AG04450 (cell line): ENCODE measurements at regions of chr3 and their contacts with region 1.

Region 1: GRCh38 chr3:160163229-160163878 is 61.9 kb upstream of the C3orf80 start:
- DNase-seq: peak; percentile 15
- H3K4me3 ChIP-seq: no peak overlapping the region
- H3K27ac ChIP-seq: no peak overlapping the region
- H3K27me3 ChIP-seq: no peaks in the 10 kb centered on the region
- CTCF ChIP-seq: peak; percentile 56

Region 2: DNA sequence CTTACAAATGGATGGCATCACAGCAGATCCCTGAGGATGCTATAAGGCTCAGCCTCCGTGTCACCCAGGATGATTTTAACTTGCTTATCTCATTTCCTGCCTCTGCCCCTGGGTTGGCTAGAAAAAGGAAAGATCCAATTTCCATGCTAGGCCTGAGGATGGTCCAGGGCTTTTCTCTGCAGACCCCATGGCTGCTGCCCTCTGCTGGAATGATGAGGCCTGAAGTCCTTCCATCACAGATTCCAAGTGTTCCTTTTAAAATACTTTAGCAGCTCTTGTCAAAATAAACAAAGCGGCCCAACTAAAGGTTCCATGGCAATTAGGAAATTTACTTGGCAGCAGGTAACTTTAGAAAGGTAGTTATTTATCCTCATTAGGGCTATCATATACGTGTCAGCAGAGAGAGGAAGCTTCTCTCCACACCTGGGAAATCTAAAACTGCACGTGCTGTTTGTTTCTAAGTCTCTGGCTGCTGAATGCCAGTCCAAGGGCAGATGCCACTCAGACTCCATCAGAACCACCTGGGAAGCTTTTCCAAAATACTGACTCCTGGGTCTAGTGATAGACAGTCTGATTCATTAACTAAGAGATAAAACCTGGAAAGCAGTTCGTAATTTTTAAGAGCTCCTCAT is 576.7 kb before region 1 on chr3:
- CTCF ChIA-PET with region 1: no interaction called
- POLR2A ChIA-PET with region 1: no interaction called
- DNase-seq: peak; percentile 11
- H3K4me3 ChIP-seq: no peak overlapping the region
- H3K27ac ChIP-seq: no peak overlapping the region
- H3K27me3 ChIP-seq: peaks cover 3% of the 10 kb centered on the region
- CTCF ChIP-seq: peak; percentile 77

Region 3: GRCh38 chr3:159872374-159873109 is 290.8 kb before region 1 on chr3:
- CTCF ChIA-PET with region 1: no interaction called
- POLR2A ChIA-PET with region 1: no interaction called
- DNase-seq: peak; percentile 74
- H3K4me3 ChIP-seq: no peak overlapping the region
- H3K27ac ChIP-seq: peak overlapping the region; percentile 71
- H3K27me3 ChIP-seq: no peaks in the 10 kb centered on the region
- CTCF ChIP-seq: peak; percentile 44

Region 4: DNA sequence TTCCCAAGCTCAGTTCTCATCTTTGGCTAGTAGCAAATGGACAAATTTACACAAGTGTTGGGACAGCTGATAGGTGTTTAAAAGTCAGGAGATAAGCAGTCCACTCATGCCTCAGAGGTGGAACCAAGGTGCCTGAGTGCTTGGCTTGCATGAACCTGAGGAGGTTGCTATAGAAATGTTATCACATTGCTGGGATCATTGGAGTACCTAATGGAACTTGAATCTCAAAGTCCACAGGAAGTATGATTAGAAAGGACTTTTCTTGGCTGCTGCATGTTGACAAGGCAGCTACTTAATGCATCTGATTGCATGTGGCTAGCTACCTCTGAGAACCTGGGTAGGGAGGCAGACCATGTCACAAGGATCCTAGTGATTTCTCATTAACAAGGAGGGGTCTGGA is 22.4 kb after region 1 on chr3:
- CTCF ChIA-PET with region 1: interaction called, 14 read pairs
- POLR2A ChIA-PET with region 1: no interaction called
- DNase-seq: no peak
- H3K4me3 ChIP-seq: no peak overlapping the region
- H3K27ac ChIP-seq: no peak overlapping the region
- H3K27me3 ChIP-seq: no peaks in the 10 kb centered on the region
- CTCF ChIP-seq: no peak

Region 5: GRCh38 chr3:160210799-160211221 is 47.5 kb after region 1 on chr3:
- CTCF ChIA-PET with region 1: interaction called, 32 read pairs
- POLR2A ChIA-PET with region 1: no interaction called
- DNase-seq: peak; percentile 6
- H3K4me3 ChIP-seq: no peak overlapping the region
- H3K27ac ChIP-seq: no peak overlapping the region
- H3K27me3 ChIP-seq: peaks cover 8% of the 10 kb centered on the region
- CTCF ChIP-seq: peak; percentile 49

Region 6: GRCh38 chr3:160343132-160343531 is 179.8 kb after region 1 on chr3:
- CTCF ChIA-PET with region 1: interaction called, 42 read pairs
- POLR2A ChIA-PET with region 1: no interaction called
- DNase-seq: no peak
- H3K4me3 ChIP-seq: no peak overlapping the region
- H3K27ac ChIP-seq: no peak overlapping the region
- H3K27me3 ChIP-seq: no peaks in the 10 kb centered on the region
- CTCF ChIP-seq: peak; percentile 42

Region 7: GRCh38 chr3:160413613-160414248 is 250.4 kb after region 1 on chr3:
- CTCF ChIA-PET with region 1: interaction called, 156 read pairs
- POLR2A ChIA-PET with region 1: no interaction called
- DNase-seq: peak; percentile 74
- H3K4me3 ChIP-seq: no peak overlapping the region
- H3K27ac ChIP-seq: no peak overlapping the region
- H3K27me3 ChIP-seq: no peaks in the 10 kb centered on the region
- CTCF ChIP-seq: peak; percentile 93

Region 8: DNA sequence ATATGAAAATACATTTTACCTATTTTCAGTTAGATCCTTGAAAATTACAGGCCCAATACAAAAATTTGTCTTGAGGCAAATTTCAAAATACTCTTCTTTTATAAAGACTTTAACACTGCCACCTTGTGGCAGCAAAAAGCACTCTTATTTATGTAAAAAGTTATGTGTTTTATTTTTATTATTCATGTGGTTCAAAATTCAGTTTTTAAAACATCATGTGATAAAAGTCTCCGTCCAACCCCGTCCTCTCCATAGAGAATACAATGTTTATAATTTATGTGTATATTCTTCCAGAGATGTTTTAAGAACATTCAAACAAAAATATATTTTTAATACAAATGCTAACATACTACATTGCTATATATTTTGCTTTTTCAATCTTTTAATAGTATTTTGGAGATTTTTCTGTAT is 323.1 kb after region 1 on chr3:
- CTCF ChIA-PET with region 1: interaction called, 16 read pairs
- POLR2A ChIA-PET with region 1: no interaction called
- DNase-seq: no peak
- H3K4me3 ChIP-seq: no peak overlapping the region
- H3K27ac ChIP-seq: no peak overlapping the region
- H3K27me3 ChIP-seq: no peaks in the 10 kb centered on the region
- CTCF ChIP-seq: peak; percentile 54

Region 9: GRCh38 chr3:160676547-160677303 is 513.4 kb after region 1 on chr3 and contains the start of gene ARL14:
- CTCF ChIA-PET with region 1: no interaction called
- POLR2A ChIA-PET with region 1: no interaction called
- DNase-seq: no peak
- H3K4me3 ChIP-seq: no peak within 1 kb of the TSS
- H3K27ac ChIP-seq: no peak within 1 kb of the TSS
- H3K27me3 ChIP-seq: no peaks in the 10 kb centered on the region
- CTCF ChIP-seq: no peak
- polyA plus RNA-seq, gene ARL14: 0.09 TPM in 1 of 2 replicates, not detected in the other